ENCODE measurements at regions of chr2 and their contacts with region 1.

Region 1: GRCh38 chr2:149561309-149561926 is 26.2 kb downstream of the MMADHC start:
- DNase-seq: peak in 3 of 9 experiments; percentile 43 to 54 (median 50)
- ATAC-seq: peak; percentile 54
- H3K4me3 ChIP-seq: no peak overlapping the region
- H3K4me3 Mint-ChIP-seq: no peak overlapping the region
- H3K27ac ChIP-seq: no peak overlapping the region
- H3K27ac Mint-ChIP-seq: no peak overlapping the region
- H3K4me1 ChIP-seq: no peaks in the 10 kb centered on the region
- H3K4me1 Mint-ChIP-seq: peaks cover 4% of the 10 kb centered on the region
- H3K27me3 ChIP-seq: no peaks in the 10 kb centered on the region
- H3K27me3 Mint-ChIP-seq: peaks cover 2% of the 10 kb centered on the region
- CTCF ChIP-seq: peak; percentile 99

Region 2: GRCh38 chr2:147937744-147938349 is 1623.6 kb before region 1 on chr2:
- CTCF ChIA-PET with region 1: no interaction called
- POLR2A ChIA-PET with region 1: no interaction called
- intact Hi-C with region 1: loop called (anchors 2 to 5 kb)
- DNase-seq: peak in 2 of 9 experiments; percentile 36 to 52
- ATAC-seq: peak; percentile 40
- H3K4me3 ChIP-seq: no peak overlapping the region
- H3K4me3 Mint-ChIP-seq: no peak overlapping the region
- H3K27ac ChIP-seq: no peak overlapping the region
- H3K27ac Mint-ChIP-seq: peak overlapping the region; percentile 32
- H3K4me1 ChIP-seq: no peaks in the 10 kb centered on the region
- H3K4me1 Mint-ChIP-seq: no peaks in the 10 kb centered on the region
- H3K27me3 ChIP-seq: no peaks in the 10 kb centered on the region
- H3K27me3 Mint-ChIP-seq: no peaks in the 10 kb centered on the region
- CTCF ChIP-seq: peak; percentile 97

Region 3: GRCh38 chr2:147989809-147990403 is 1571.5 kb before region 1 on chr2:
- CTCF ChIA-PET with region 1: no interaction called
- POLR2A ChIA-PET with region 1: no interaction called
- intact Hi-C with region 1: loop called in 1 of 2 experiments (anchors 5 kb)
- DNase-seq: peak in 4 of 9 experiments; percentile 29 to 70 (median 45)
- ATAC-seq: peak; percentile 92
- H3K4me3 ChIP-seq: no peak overlapping the region
- H3K4me3 Mint-ChIP-seq: no peak overlapping the region
- H3K27ac ChIP-seq: no peak overlapping the region
- H3K27ac Mint-ChIP-seq: peak overlapping the region; percentile 11
- H3K4me1 ChIP-seq: no peaks in the 10 kb centered on the region
- H3K4me1 Mint-ChIP-seq: peaks cover 26% of the 10 kb centered on the region
- H3K27me3 ChIP-seq: no peaks in the 10 kb centered on the region
- H3K27me3 Mint-ChIP-seq: no peaks in the 10 kb centered on the region
- CTCF ChIP-seq: peak; percentile 99

Region 4: GRCh38 chr2:148989882-148990493 is 571.4 kb before region 1 on chr2:
- CTCF ChIA-PET with region 1: no interaction called
- POLR2A ChIA-PET with region 1: no interaction called
- intact Hi-C with region 1: no loop called
- DNase-seq: peak in 8 of 9 experiments; percentile 4 to 75 (median 44)
- ATAC-seq: peak; percentile 95
- H3K4me3 ChIP-seq: no peak overlapping the region
- H3K4me3 Mint-ChIP-seq: no peak overlapping the region
- H3K27ac ChIP-seq: no peak overlapping the region
- H3K27ac Mint-ChIP-seq: no peak overlapping the region
- H3K4me1 ChIP-seq: no peaks in the 10 kb centered on the region
- H3K4me1 Mint-ChIP-seq: peaks cover 4% of the 10 kb centered on the region
- H3K27me3 ChIP-seq: no peaks in the 10 kb centered on the region
- H3K27me3 Mint-ChIP-seq: no peaks in the 10 kb centered on the region
- CTCF ChIP-seq: peak; percentile 78

Region 5: DNA sequence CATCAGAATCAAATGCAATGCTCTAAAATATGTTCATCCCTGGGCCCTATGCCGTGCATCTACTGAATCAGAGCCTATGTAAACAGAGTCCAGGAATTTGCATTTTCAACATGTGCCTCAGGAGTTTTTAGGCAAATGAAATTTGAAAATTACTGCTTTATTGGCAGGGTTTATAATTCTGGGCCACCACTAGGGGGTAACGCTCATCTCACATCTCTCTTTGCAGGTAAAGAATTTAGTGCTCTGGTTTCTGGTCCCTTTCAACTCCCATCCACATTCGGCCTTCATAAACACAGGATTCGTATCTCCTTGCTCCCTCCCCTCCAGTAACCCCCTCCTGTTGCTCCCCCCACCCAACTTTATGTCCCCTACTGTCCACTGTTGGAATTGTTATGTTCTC is 473.7 kb before region 1 on chr2:
- CTCF ChIA-PET with region 1: no interaction called
- POLR2A ChIA-PET with region 1: no interaction called
- intact Hi-C with region 1: loop called in 1 of 2 experiments (anchors 5 kb)
- DNase-seq: peak in 2 of 9 experiments; percentile 5 to 21
- ATAC-seq: no peak
- H3K4me3 ChIP-seq: no peak overlapping the region
- H3K4me3 Mint-ChIP-seq: no peak overlapping the region
- H3K27ac ChIP-seq: no peak overlapping the region
- H3K27ac Mint-ChIP-seq: no peak overlapping the region
- H3K4me1 ChIP-seq: no peaks in the 10 kb centered on the region
- H3K4me1 Mint-ChIP-seq: no peaks in the 10 kb centered on the region
- H3K27me3 ChIP-seq: no peaks in the 10 kb centered on the region
- H3K27me3 Mint-ChIP-seq: peaks cover 14% of the 10 kb centered on the region
- CTCF ChIP-seq: no peak

Region 6: GRCh38 chr2:149527998-149528755 is 33.2 kb before region 1 on chr2:
- CTCF ChIA-PET with region 1: no interaction called
- POLR2A ChIA-PET with region 1: no interaction called
- intact Hi-C with region 1: no loop called
- DNase-seq: no peak
- ATAC-seq: no peak
- H3K4me3 ChIP-seq: no peak overlapping the region
- H3K4me3 Mint-ChIP-seq: no peak overlapping the region
- H3K27ac ChIP-seq: no peak overlapping the region
- H3K27ac Mint-ChIP-seq: no peak overlapping the region
- H3K4me1 ChIP-seq: no peaks in the 10 kb centered on the region
- H3K4me1 Mint-ChIP-seq: no peaks in the 10 kb centered on the region
- H3K27me3 ChIP-seq: no peaks in the 10 kb centered on the region
- H3K27me3 Mint-ChIP-seq: peaks cover 23% of the 10 kb centered on the region
- CTCF ChIP-seq: no peak

Region 7: GRCh38 chr2:149787206-149787605 is 225.8 kb after region 1 on chr2:
- CTCF ChIA-PET with region 1: no interaction called
- POLR2A ChIA-PET with region 1: no interaction called
- intact Hi-C with region 1: no loop called
- DNase-seq: no peak
- ATAC-seq: no peak
- H3K4me3 ChIP-seq: no peak overlapping the region
- H3K4me3 Mint-ChIP-seq: no peak overlapping the region
- H3K27ac ChIP-seq: no peak overlapping the region
- H3K27ac Mint-ChIP-seq: no peak overlapping the region
- H3K4me1 ChIP-seq: no peaks in the 10 kb centered on the region
- H3K4me1 Mint-ChIP-seq: no peaks in the 10 kb centered on the region
- H3K27me3 ChIP-seq: no peaks in the 10 kb centered on the region
- H3K27me3 Mint-ChIP-seq: no peaks in the 10 kb centered on the region
- CTCF ChIP-seq: no peak

Region 8: GRCh38 chr2:150503364-150503763 is 941.9 kb after region 1 on chr2:
- CTCF ChIA-PET with region 1: no interaction called
- POLR2A ChIA-PET with region 1: no interaction called
- intact Hi-C with region 1: no loop called
- DNase-seq: no peak
- ATAC-seq: no peak
- H3K4me3 ChIP-seq: no peak overlapping the region
- H3K4me3 Mint-ChIP-seq: no peak overlapping the region
- H3K27ac ChIP-seq: no peak overlapping the region
- H3K27ac Mint-ChIP-seq: no peak overlapping the region
- H3K4me1 ChIP-seq: no peaks in the 10 kb centered on the region
- H3K4me1 Mint-ChIP-seq: no peaks in the 10 kb centered on the region
- H3K27me3 ChIP-seq: no peaks in the 10 kb centered on the region
- H3K27me3 Mint-ChIP-seq: peaks cover 2% of the 10 kb centered on the region
- CTCF ChIP-seq: no peak